ENCODE measurements at regions of chr14 and their contacts with region 1.

Region 1: DNA sequence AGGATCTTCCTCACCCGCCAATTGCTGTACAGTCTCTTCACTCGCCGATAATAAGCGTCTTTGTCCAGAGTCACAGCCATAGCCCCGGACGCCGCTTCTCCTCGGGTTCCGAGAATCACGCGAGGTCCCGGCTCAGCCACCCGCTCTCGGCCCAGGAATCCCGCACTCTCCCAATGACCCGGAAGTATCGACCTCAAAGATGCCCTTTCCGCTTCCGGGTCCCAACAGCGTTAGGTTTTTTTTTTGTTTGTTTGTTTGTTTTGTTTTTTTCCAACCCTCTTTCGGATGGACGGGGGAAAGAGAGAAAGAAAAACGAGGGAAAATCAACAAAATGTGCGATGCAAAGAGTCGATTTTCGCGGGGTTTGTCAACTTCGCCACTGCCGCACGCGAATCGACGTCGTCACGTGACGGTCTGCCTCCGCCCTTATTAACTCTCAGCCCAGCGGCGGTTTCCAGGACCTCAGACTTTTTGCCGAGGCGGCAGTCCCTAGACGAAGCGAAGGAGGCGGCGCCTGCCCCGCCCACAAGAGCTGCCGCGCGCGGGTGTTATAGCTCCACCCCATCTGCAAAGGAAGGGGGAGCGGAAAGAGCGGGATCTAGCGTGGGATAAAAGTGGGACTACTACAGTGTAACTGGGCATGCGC is at the start of gene SUPT16H:
- DNase-seq: peak; percentile 93
- H3K4me3 ChIP-seq: peak within 1 kb of the TSS; percentile 51 to 76
- H3K27ac ChIP-seq: peak within 1 kb of the TSS; percentile 83 to 94
- H3K4me1 ChIP-seq: no peaks in the 10 kb centered on the region
- H3K27me3 ChIP-seq: no peaks in the 10 kb centered on the region
- CTCF ChIP-seq: peak in 2 of 4 experiments; percentile 13 to 23
- POLR2A ChIP-seq: peak; percentile 22
- total RNA-seq, gene SUPT16H: 50.3 to 83.2 TPM

Region 2: GRCh38 chr14:21269252-21270046 is 114.5 kb before region 1 on chr14 and contains the start of gene HNRNPC:
- intact Hi-C with region 1: loop called (anchors 2 kb)
- DNase-seq: peak; percentile 100
- H3K4me3 ChIP-seq: peak within 1 kb of the TSS; percentile 83 to 95
- H3K27ac ChIP-seq: peak within 1 kb of the TSS; percentile 95 to 99
- H3K4me1 ChIP-seq: peaks cover 6% of the 10 kb centered on the region
- H3K27me3 ChIP-seq: no peaks in the 10 kb centered on the region
- CTCF ChIP-seq: no peak
- POLR2A ChIP-seq: peak; percentile 95
- total RNA-seq, gene HNRNPC: 411 to 423 TPM

Region 3: GRCh38 chr14:21308479-21309237 is 75.3 kb before region 1 on chr14:
- intact Hi-C with region 1: no loop called
- DNase-seq: peak; percentile 93
- H3K4me3 ChIP-seq: peak overlapping the region; percentile 16 to 34
- H3K27ac ChIP-seq: peak overlapping the region; percentile 81 to 82
- H3K4me1 ChIP-seq: no peaks in the 10 kb centered on the region
- H3K27me3 ChIP-seq: no peaks in the 10 kb centered on the region
- CTCF ChIP-seq: no peak
- POLR2A ChIP-seq: peak; percentile 92

Region 4: DNA sequence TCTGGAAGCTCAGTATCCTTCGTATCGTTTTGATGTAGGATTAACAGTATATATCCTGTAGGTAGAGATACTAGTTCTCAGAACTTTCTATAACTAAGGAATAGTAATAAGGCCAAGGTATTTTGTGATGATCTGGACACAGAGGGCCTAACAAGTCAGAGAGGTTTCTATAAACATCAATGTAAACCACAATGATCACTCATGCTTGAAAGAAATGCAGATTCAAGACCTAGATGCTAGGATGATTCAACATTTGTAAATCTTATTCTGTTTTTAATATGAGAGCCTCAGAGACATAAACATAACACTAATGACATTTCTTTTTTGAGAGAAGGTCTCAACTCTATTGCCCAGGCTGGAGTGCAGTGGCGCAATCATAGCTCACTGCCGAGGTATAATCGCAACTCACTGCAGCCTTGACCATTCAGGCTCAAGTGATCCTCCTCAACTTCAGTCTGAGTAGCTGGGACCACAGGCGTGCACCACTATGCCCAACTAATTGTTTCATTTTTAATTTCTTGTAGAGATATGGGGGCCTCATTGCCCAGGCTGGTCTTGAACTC is 16.3 kb before region 1 on chr14:
- intact Hi-C with region 1: no loop called
- DNase-seq: no peak
- H3K4me3 ChIP-seq: no peak overlapping the region
- H3K27ac ChIP-seq: no peak overlapping the region
- H3K4me1 ChIP-seq: no peaks in the 10 kb centered on the region
- H3K27me3 ChIP-seq: no peaks in the 10 kb centered on the region
- CTCF ChIP-seq: no peak
- POLR2A ChIP-seq: no peak